ENCODE measurements at regions of chrX and their contacts with region 1.

Region 1: GRCh38 chrX:74382613-74383012 is 38.7 kb upstream of the SLC16A2 start:
- H3K4me3 ChIP-seq: no peak overlapping the region
- H3K27ac ChIP-seq: no peak overlapping the region
- H3K4me1 ChIP-seq: no peaks in the 10 kb centered on the region
- CTCF ChIP-seq: peak; percentile 82

Region 2: GRCh38 chrX:74343343-74344279 is 39.0 kb before region 1 on chrX:
- CTCF ChIA-PET with region 1: interaction called, 20 read pairs
- POLR2A ChIA-PET with region 1: no interaction called
- H3K4me3 ChIP-seq: no peak overlapping the region
- H3K27ac ChIP-seq: 0 out of 2 replicates have a peak overlapping the region, but pooled peaks have one; percentile 18
- H3K4me1 ChIP-seq: no peaks in the 10 kb centered on the region
- CTCF ChIP-seq: peak; percentile 60; the same call in 1 of the 2 replicates

Region 3: GRCh38 chrX:74371425-74372222 is 11.0 kb before region 1 on chrX:
- CTCF ChIA-PET with region 1: interaction called, 10 read pairs
- POLR2A ChIA-PET with region 1: interaction called, 3 read pairs
- H3K4me3 ChIP-seq: no peak overlapping the region
- H3K27ac ChIP-seq: no peak overlapping the region
- H3K4me1 ChIP-seq: no peaks in the 10 kb centered on the region
- CTCF ChIP-seq: no peak

Region 4: GRCh38 chrX:74536152-74536831 is 153.7 kb after region 1 on chrX:
- CTCF ChIA-PET with region 1: interaction called, 10 read pairs
- POLR2A ChIA-PET with region 1: interaction called, 3 read pairs
- H3K4me3 ChIP-seq: peak overlapping the region; percentile 33
- H3K27ac ChIP-seq: peak overlapping the region; percentile 90
- H3K4me1 ChIP-seq: peaks cover 7% of the 10 kb centered on the region; the same call in 1 of the 2 replicates
- CTCF ChIP-seq: peak; percentile 51